Thyroid gland (tissue), 4 donors: ENCODE measurements at regions of chr13 and their contacts with region 1.

Region 1: DNA sequence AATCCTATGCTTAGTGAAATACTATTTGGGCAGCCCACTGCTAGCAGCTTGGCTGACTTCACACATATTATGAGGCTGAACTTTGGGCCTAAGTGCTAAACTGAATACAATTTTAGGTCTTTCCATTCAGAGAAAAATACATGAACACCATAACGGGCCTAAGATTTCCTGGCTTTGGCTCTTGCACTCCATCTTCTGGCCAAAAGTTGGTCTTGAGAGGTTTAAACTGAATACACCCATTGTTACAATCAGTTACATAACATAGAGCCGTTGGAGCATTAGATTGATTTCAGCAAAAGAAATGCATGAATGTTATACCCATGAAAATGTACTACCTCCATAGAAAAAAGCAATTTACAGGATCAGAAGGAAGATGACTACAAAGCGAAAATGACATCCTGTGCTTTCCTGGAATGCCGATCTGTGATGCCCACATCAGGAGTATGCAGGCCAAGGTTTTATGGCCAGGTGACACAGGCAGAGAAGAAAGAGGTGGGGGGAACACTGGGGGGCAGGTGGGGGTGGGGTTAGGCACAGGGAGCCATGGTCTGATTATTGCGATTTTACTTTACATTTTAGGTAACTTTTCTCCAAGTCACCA is 11.1 kb upstream of the SHISA2 start:
- DNase-seq: peak; percentile 42 to 52
- H3K4me3 ChIP-seq: no peak overlapping the region
- H3K27ac ChIP-seq: no peak overlapping the region
- H3K4me1 ChIP-seq: peaks cover 4 to 19% of the 10 kb centered on the region in 2 donors
- H3K27me3 ChIP-seq: no peaks in the 10 kb centered on the region
- CTCF ChIP-seq: peak; percentile 46 to 87 (median 80)
- POLR2A ChIP-seq: no peak

Region 2: GRCh38 chr13:25574437-25575411 is 488.2 kb before region 1 on chr13:
- intact Hi-C with region 1: loop called (anchors 5 kb)
- DNase-seq: peak; percentile 81 to 87
- H3K4me3 ChIP-seq: no peak overlapping the region
- H3K27ac ChIP-seq: no peak overlapping the region
- H3K4me1 ChIP-seq: peaks cover 0 to 3% of the 10 kb centered on the region in 2 donors
- H3K27me3 ChIP-seq: no peaks in the 10 kb centered on the region
- CTCF ChIP-seq: peak; percentile 68 to 91 (median 84)
- POLR2A ChIP-seq: no peak

Region 3: GRCh38 chr13:25988706-25989105 is 74.2 kb before region 1 on chr13:
- intact Hi-C with region 1: loop called (anchors 5 kb)
- DNase-seq: no peak
- H3K4me3 ChIP-seq: no peak overlapping the region
- H3K27ac ChIP-seq: no peak overlapping the region
- H3K4me1 ChIP-seq: peaks cover 4 to 6% of the 10 kb centered on the region in 2 donors
- H3K27me3 ChIP-seq: no peaks in the 10 kb centered on the region
- CTCF ChIP-seq: no peak
- POLR2A ChIP-seq: no peak